Endothelial cell of umbilical vein (primary cell): ENCODE measurements at regions of chr2 and their contacts with region 1.

Region 1: DNA sequence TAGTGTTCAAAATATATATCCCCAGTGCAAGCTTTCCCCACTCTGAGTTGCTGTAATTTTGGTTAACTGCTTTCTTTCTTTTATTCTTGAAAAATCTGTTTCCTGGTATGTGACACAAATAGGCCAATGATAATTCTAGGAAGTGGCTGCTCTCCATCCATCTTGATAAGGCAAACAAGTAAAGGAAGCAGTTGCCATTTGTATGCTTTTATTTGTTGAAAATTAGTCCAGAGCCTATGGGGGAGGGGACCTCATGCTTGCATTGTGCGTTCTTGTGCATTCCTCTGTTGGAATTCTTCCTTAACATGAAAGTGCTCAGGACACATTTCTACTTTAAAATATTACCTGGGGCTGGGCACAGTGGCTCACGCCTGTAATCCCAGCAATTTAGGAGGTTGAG is 111.2 kb upstream of the FSHR start:
- DNase-seq: peak; percentile 74
- H3K4me3 ChIP-seq: no peak overlapping the region
- H3K27ac ChIP-seq: peak overlapping the region; percentile 41
- H3K4me1 ChIP-seq: peaks cover 13% of the 10 kb centered on the region
- H3K27me3 ChIP-seq: no peaks in the 10 kb centered on the region
- CTCF ChIP-seq: no peak
- POLR2A ChIP-seq: no peak

Region 2: GRCh38 chr2:49210191-49210590 is 55.3 kb before region 1 on chr2:
- CTCF ChIA-PET with region 1: no interaction called
- POLR2A ChIA-PET with region 1: no interaction called
- dilution Hi-C with region 1: no loop called
- intact Hi-C with region 1: no loop called
- DNase-seq: no peak
- H3K4me3 ChIP-seq: no peak overlapping the region
- H3K27ac ChIP-seq: no peak overlapping the region
- H3K4me1 ChIP-seq: no peaks in the 10 kb centered on the region
- H3K27me3 ChIP-seq: no peaks in the 10 kb centered on the region
- CTCF ChIP-seq: no peak
- POLR2A ChIP-seq: no peak

Region 3: DNA sequence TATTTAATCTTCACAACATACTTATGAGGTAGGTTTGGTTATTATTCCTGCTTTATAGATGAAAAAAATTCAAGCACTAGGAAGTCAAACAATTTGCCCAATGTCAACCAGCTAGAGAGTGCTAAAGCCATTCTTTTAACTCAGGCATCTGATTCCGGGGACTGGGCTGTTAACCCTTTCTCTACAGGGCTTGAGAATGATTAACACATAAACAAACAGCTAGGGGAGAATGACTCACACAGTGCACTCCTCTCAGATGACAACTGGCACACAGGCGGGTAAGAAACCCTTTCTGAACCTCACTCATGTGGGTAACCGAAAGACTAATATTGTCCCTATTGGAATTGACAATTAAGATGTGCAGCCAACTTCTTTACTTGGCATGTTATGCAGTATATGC is 24.9 kb before region 1 on chr2:
- CTCF ChIA-PET with region 1: no interaction called
- POLR2A ChIA-PET with region 1: no interaction called
- dilution Hi-C with region 1: no loop called
- intact Hi-C with region 1: no loop called
- DNase-seq: no peak
- H3K4me3 ChIP-seq: no peak overlapping the region
- H3K27ac ChIP-seq: no peak overlapping the region
- H3K4me1 ChIP-seq: no peaks in the 10 kb centered on the region
- H3K27me3 ChIP-seq: no peaks in the 10 kb centered on the region
- CTCF ChIP-seq: no peak
- POLR2A ChIP-seq: no peak

Region 4: GRCh38 chr2:49332415-49332814 is 66.9 kb after region 1 on chr2:
- CTCF ChIA-PET with region 1: no interaction called
- POLR2A ChIA-PET with region 1: no interaction called
- dilution Hi-C with region 1: no loop called
- intact Hi-C with region 1: loop called (anchors 5 kb)
- DNase-seq: no peak
- H3K4me3 ChIP-seq: no peak overlapping the region
- H3K27ac ChIP-seq: no peak overlapping the region
- H3K4me1 ChIP-seq: no peaks in the 10 kb centered on the region
- H3K27me3 ChIP-seq: no peaks in the 10 kb centered on the region
- CTCF ChIP-seq: no peak
- POLR2A ChIP-seq: no peak